ENCODE measurements at regions of chr4 and their contacts with region 1.

Region 1: DNA sequence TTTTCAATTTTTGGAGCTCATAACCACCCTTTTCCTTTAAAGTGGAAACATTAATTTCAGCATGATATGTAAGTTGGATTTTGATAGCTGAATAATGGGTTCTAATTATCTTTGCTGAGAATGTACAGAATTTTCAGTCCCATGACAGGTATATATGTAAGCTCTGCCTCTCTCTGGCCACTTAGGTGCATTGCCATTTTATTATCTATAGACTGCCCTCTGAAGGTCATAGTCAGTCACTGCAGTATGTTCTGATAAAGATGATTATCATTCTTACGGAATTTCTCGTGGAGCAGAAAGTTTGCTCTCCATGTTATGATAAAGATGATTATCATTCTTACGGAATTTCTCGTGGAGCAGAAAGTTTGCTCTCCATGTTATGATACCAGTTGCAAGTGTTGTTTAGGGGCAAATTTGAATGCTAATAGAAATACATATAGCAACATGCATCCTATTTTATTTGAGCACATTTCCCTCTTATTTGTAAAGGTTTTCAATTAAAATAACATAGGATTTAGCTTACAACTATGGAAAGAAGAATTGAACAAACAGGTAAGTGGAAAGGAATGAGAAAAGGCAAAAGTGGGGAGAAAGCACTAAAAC is 10.4 kb downstream of the AFP start:
- DNase-seq: peak; percentile 67
- H3K4me3 Mint-ChIP-seq: no peak overlapping the region
- H3K27ac Mint-ChIP-seq: no peak overlapping the region
- H3K4me1 Mint-ChIP-seq: peaks cover 19% of the 10 kb centered on the region
- H3K27me3 Mint-ChIP-seq: peaks cover 17% of the 10 kb centered on the region
- CTCF ChIP-seq: peak; percentile 91

Region 2: DNA sequence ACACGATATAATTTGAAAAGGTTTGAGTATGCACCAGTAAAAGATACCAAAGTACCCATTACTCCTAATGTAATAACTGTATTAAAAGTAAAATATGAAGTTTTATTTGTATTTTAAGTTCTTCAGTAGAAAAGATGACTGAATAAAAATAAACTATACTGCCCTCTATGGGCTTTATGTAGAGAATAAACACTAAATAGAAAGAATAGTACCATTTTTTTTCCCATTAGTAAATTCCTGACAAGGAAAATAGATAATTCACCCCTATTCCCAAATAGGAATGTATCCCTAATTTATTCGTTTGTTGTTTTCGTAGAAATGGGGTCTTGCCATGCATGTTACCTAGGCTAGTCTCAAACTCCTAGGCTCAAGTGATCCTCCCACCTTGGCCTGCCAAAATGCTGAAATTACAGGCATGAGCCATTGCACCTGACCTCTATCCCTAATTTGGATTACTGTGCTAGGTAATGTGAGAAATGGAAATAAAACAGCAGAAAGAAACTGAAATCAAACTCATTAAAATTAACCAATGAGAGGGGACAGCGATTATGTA is 303.4 kb before region 1 on chr4:
- CTCF ChIA-PET with region 1: no interaction called
- POLR2A ChIA-PET with region 1: no interaction called
- intact Hi-C with region 1: no loop called
- DNase-seq: no peak
- H3K4me3 Mint-ChIP-seq: no peak overlapping the region
- H3K27ac Mint-ChIP-seq: no peak overlapping the region
- H3K4me1 Mint-ChIP-seq: no peaks in the 10 kb centered on the region
- H3K27me3 Mint-ChIP-seq: no peaks in the 10 kb centered on the region
- CTCF ChIP-seq: no peak

Region 3: DNA sequence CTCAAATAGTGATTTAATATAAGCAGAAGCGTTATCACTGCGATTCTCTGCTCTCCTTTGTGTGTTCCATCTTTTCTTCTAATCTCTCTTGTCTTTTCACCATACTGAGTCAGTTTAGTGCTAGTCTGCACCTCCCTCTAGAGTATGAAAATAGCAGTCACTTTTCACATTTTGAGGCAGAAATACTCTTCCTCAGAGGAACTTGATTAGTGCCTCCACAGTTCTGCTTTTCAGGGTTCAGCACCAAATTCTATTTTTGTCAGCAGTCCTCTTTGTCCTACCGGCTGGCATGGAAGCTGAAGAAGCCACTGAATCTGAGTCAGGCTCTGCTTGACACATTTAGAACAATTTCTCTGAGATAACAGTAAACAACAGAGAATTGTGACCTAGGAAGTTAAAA is 138.2 kb before region 1 on chr4:
- CTCF ChIA-PET with region 1: interaction called, 51 read pairs
- POLR2A ChIA-PET with region 1: interaction called, 3 read pairs
- intact Hi-C with region 1: loop called (anchors 1 kb)
- DNase-seq: peak; percentile 10
- H3K4me3 Mint-ChIP-seq: no peak overlapping the region
- H3K27ac Mint-ChIP-seq: no peak overlapping the region
- H3K4me1 Mint-ChIP-seq: peaks cover 11% of the 10 kb centered on the region
- H3K27me3 Mint-ChIP-seq: no peaks in the 10 kb centered on the region
- CTCF ChIP-seq: peak; percentile 22

Region 4: GRCh38 chr4:73341454-73341853 is 105.0 kb before region 1 on chr4:
- CTCF ChIA-PET with region 1: interaction called, 162 read pairs
- POLR2A ChIA-PET with region 1: interaction called, 7 read pairs
- intact Hi-C with region 1: loop called (anchors 1 kb)
- DNase-seq: peak; percentile 72
- H3K4me3 Mint-ChIP-seq: no peak overlapping the region
- H3K27ac Mint-ChIP-seq: no peak overlapping the region
- H3K4me1 Mint-ChIP-seq: no peaks in the 10 kb centered on the region
- H3K27me3 Mint-ChIP-seq: no peaks in the 10 kb centered on the region
- CTCF ChIP-seq: peak; percentile 62

Region 5: DNA sequence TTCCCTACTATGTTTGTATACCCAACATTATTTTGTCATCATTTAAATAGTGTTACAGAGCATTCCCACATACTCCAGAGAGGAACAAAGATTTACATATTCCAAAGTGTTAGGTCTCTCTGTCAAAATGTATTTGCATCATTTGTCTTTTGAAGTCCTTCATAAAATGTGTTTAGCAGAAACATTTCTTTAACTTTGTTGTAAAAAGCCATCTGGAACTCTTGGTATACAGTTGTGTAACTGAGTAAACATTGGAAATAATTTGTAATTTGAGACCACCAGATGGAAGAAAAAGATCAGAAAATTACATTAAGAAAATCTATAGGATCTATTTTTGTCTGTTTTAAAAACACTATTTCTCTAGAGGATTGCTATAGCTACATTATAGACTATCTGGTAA is 98.9 kb before region 1 on chr4:
- CTCF ChIA-PET with region 1: interaction called, 162 read pairs
- POLR2A ChIA-PET with region 1: interaction called, 7 read pairs
- intact Hi-C with region 1: no loop called
- DNase-seq: no peak
- H3K4me3 Mint-ChIP-seq: no peak overlapping the region
- H3K27ac Mint-ChIP-seq: no peak overlapping the region
- H3K4me1 Mint-ChIP-seq: no peaks in the 10 kb centered on the region
- H3K27me3 Mint-ChIP-seq: no peaks in the 10 kb centered on the region
- CTCF ChIP-seq: no peak

Region 6: GRCh38 chr4:73419106-73420038 is 27.1 kb before region 1 on chr4:
- CTCF ChIA-PET with region 1: interaction called, 16 read pairs
- POLR2A ChIA-PET with region 1: no interaction called
- intact Hi-C with region 1: no loop called
- DNase-seq: no peak
- H3K4me3 Mint-ChIP-seq: no peak overlapping the region
- H3K27ac Mint-ChIP-seq: no peak overlapping the region
- H3K4me1 Mint-ChIP-seq: no peaks in the 10 kb centered on the region
- H3K27me3 Mint-ChIP-seq: peaks cover 30% of the 10 kb centered on the region
- CTCF ChIP-seq: no peak

Region 7: GRCh38 chr4:73434311-73434710 is 12.1 kb before region 1 on chr4:
- CTCF ChIA-PET with region 1: interaction called, 23 read pairs
- POLR2A ChIA-PET with region 1: interaction called, 3 read pairs
- intact Hi-C with region 1: no loop called
- DNase-seq: peak; percentile 24
- H3K4me3 Mint-ChIP-seq: no peak overlapping the region
- H3K27ac Mint-ChIP-seq: no peak overlapping the region
- H3K4me1 Mint-ChIP-seq: no peaks in the 10 kb centered on the region
- H3K27me3 Mint-ChIP-seq: peaks cover 48% of the 10 kb centered on the region
- CTCF ChIP-seq: peak; percentile 40

Region 8: DNA sequence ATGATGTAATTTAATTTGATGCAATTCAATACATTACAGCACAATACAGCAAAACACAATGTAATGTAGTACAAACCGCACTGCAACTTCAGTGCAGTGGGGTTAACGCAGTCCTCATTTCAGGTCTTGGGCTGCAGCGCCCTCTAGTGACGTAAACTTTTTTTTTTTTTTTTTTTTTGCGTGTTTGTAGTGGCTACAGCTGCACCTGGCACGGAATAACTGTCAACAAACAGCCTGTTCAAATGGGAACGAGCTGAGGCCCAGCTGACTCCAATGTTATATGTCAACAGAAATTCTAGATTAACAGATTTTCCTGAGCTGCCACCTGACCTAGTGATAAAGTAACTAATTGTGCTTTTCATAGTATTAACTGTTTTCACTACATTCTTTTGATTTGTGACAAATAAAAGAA is 207.3 kb after region 1 on chr4:
- CTCF ChIA-PET with region 1: interaction called, 11 read pairs
- POLR2A ChIA-PET with region 1: no interaction called
- intact Hi-C with region 1: loop called (anchors 5 kb)
- DNase-seq: peak; percentile 71
- H3K4me3 Mint-ChIP-seq: no peak overlapping the region
- H3K27ac Mint-ChIP-seq: no peak overlapping the region
- H3K4me1 Mint-ChIP-seq: peaks cover 14% of the 10 kb centered on the region
- H3K27me3 Mint-ChIP-seq: no peaks in the 10 kb centered on the region
- CTCF ChIP-seq: peak; percentile 52

Region 9: DNA sequence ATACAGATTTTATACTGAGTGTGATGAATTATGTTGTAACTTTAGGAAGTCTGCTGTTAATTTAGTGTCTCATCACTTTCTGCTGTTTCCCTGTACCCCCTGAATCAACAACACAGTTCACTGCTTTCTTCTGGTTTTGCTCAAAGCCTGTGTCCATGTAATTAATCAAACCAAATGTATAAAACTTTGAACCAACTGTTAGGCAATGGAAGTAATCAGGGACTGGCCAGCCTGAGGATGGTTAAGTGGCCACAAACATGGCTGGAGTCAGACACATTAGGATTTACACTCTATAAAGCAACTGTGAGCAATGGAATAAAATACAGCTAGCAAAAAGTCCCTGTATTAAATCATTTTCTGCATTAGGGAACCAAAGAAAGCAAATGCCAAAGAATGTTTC is 465.3 kb after region 1 on chr4:
- CTCF ChIA-PET with region 1: no interaction called
- POLR2A ChIA-PET with region 1: no interaction called
- intact Hi-C with region 1: no loop called
- DNase-seq: no peak
- H3K4me3 Mint-ChIP-seq: no peak overlapping the region
- H3K27ac Mint-ChIP-seq: no peak overlapping the region
- H3K4me1 Mint-ChIP-seq: peaks cover 10% of the 10 kb centered on the region
- H3K27me3 Mint-ChIP-seq: no peaks in the 10 kb centered on the region
- CTCF ChIP-seq: no peak